HCT116 (cell line): ENCODE measurements at regions of chr17 and their contacts with region 1.

Region 1: GRCh38 chr17:3012926-3013581 is 50.4 kb downstream of the OR1D5 start:
- DNase-seq: peak; percentile 26
- ATAC-seq: peak; percentile 92
- H3K4me3 ChIP-seq: no peak overlapping the region
- H3K27ac ChIP-seq: no peak overlapping the region
- H3K4me1 ChIP-seq: peaks cover 0 to 15% of the 10 kb centered on the region in 2 experiments; a peak in 2 of 4 replicates
- H3K27me3 ChIP-seq: no peaks in the 10 kb centered on the region
- CTCF ChIP-seq: peak; percentile 69 to 75 (median 70); a peak in 5 of 6 replicates
- POLR2A ChIP-seq: no peak
- RAD21 ChIP-seq: peak; percentile 90

Region 2: GRCh38 chr17:2797637-2798036 is 215.4 kb before region 1 on chr17:
- CTCF ChIA-PET with region 1: no interaction called
- POLR2A ChIA-PET with region 1: no interaction called
- RAD21 ChIA-PET with region 1: no interaction called
- intact Hi-C with region 1: no loop called
- DNase-seq: no peak
- ATAC-seq: no peak
- H3K4me3 ChIP-seq: no peak overlapping the region
- H3K27ac ChIP-seq: no peak overlapping the region
- H3K4me1 ChIP-seq: no peaks in the 10 kb centered on the region
- H3K27me3 ChIP-seq: no peaks in the 10 kb centered on the region
- CTCF ChIP-seq: no peak
- POLR2A ChIP-seq: no peak
- RAD21 ChIP-seq: no peak

Region 3: DNA sequence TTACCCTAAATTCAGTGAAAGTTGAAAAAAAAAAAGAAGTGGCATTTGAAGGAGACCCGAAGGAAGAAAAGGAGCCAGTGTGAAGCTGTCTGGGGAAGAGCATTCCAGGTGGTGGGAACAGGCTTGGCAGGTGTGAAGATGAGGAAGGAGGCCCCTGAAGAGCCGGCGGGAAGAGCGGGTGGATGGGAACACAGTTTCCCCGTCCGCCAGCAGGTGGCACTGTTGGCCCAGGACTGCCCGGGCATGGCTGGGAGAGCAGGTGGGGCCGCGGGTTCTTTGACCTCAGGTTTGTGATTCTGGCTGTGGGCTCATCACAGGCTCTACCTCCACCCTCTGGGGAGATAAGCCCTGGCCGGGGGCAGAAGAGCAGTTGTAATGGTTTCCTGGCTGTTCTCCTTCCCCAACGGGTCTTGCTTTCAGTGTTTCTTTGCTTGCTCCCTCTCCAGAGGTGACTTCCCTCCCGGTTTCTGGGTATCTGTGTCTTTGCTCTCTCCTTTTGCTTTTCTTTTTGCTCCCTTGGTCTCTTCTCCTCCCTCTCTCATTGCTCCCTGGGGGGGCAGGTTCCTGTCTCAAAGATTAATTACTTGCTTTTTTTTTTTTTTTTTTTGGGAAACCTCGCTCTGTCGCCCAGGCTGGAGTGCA is 184.5 kb before region 1 on chr17:
- CTCF ChIA-PET with region 1: interaction called, 5 read pairs
- POLR2A ChIA-PET with region 1: no interaction called
- RAD21 ChIA-PET with region 1: no interaction called
- intact Hi-C with region 1: loop called (anchors 1 kb)
- DNase-seq: peak; percentile 43
- ATAC-seq: peak; percentile 95
- H3K4me3 ChIP-seq: no peak overlapping the region
- H3K27ac ChIP-seq: no peak overlapping the region
- H3K4me1 ChIP-seq: peaks cover 0 to 3% of the 10 kb centered on the region in 2 experiments; a peak in 3 of 4 replicates
- H3K27me3 ChIP-seq: no peaks in the 10 kb centered on the region
- CTCF ChIP-seq: peak; percentile 82 to 93 (median 90)
- POLR2A ChIP-seq: no peak
- RAD21 ChIP-seq: peak; percentile 96

Region 4: DNA sequence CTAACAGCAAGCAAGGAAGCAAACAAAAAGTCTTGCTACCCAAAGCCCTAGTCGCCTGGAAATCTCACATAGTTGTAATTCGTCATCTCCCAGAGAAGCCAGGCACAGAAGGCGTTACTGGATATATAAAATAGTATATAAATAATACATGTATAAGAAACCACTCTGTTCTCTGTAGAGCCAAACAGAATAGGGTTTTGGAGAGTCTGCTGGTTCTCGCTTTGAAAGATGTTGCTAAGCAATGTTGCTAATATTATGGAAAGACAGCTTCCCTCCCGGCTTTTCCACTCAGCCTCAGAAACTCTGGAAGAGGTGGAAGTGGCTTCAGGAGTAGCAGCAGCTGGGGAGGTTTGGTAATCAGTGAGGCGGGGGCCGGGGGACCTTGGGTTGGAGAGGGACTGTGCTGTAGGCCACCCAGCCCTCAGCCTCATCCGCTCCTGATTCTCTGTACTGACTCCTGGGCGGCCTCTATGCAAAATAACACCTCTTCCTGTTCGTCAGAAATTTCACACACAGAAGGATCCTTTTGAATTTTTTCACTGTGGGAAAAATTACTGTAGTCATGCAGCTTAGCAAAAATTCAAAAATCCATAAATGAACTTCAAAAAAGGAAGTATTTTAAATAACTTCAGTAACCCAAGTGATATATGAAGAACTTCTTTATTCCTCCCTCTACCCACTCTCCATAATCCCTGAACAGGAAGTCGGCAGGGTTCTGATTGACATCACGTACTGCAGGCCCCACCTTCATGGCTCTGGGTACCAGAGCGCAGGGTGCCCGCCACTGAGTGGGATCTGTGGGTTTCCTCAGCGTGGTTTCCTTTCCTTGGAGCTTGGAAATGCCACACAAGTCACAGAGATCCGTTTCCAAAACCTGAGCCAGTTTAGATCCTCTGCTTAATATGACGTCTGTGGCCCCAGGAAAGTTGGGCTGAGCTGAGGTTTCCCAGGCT is 165.4 kb before region 1 on chr17:
- CTCF ChIA-PET with region 1: interaction called, 29 read pairs
- POLR2A ChIA-PET with region 1: no interaction called
- RAD21 ChIA-PET with region 1: interaction called, 7 to 8 read pairs
- intact Hi-C with region 1: loop called (anchors 1 kb)
- DNase-seq: no peak
- ATAC-seq: no peak
- H3K4me3 ChIP-seq: no peak overlapping the region
- H3K27ac ChIP-seq: no peak overlapping the region
- H3K4me1 ChIP-seq: peaks cover 0 to 11% of the 10 kb centered on the region in 2 experiments; a peak in 1 of 4 replicates
- H3K27me3 ChIP-seq: no peaks in the 10 kb centered on the region
- CTCF ChIP-seq: no peak
- POLR2A ChIP-seq: no peak
- RAD21 ChIP-seq: no peak

Region 5: GRCh38 chr17:2937331-2938003 is 75.6 kb before region 1 on chr17:
- CTCF ChIA-PET with region 1: interaction called, 4 read pairs
- POLR2A ChIA-PET with region 1: no interaction called
- RAD21 ChIA-PET with region 1: no interaction called
- intact Hi-C with region 1: loop called (anchors 2 kb)
- DNase-seq: no peak
- ATAC-seq: no peak
- H3K4me3 ChIP-seq: no peak overlapping the region
- H3K27ac ChIP-seq: no peak overlapping the region
- H3K4me1 ChIP-seq: no peaks in the 10 kb centered on the region
- H3K27me3 ChIP-seq: no peaks in the 10 kb centered on the region
- CTCF ChIP-seq: peak; percentile 14 to 38 (median 22); a peak in 1 of 6 replicates
- POLR2A ChIP-seq: no peak
- RAD21 ChIP-seq: peak; percentile 72